Activated CD4-positive, alpha-beta memory T cell treated with anti-CD3 and anti-CD28 coated beads for 36 hours (primary cell): ENCODE measurements at regions of chr3 and their contacts with region 1.

Region 1: DNA sequence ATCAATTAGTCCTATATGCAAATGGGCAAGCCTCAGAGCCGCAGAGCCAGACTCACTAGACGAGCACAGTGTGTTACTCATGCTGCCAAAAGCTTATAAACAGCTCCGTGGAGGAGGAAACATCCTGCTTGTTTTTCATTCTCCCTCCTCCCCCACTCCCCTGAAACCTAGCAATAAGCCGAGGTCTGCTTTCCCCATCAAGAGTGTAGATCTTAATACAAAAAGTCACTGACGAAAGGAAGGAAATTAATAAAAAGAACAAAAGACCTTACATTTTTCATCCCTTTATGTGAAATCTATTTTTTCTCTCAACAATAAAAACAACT is 88.5 kb downstream of the XXYLT1 start:
- DNase-seq: peak; percentile 53
- H3K4me3 Mint-ChIP-seq: peak overlapping the region; percentile 38
- H3K27ac Mint-ChIP-seq: peak overlapping the region; percentile 80
- H3K4me1 Mint-ChIP-seq: peaks cover 59% of the 10 kb centered on the region
- H3K27me3 Mint-ChIP-seq: no peaks in the 10 kb centered on the region

Region 2: DNA sequence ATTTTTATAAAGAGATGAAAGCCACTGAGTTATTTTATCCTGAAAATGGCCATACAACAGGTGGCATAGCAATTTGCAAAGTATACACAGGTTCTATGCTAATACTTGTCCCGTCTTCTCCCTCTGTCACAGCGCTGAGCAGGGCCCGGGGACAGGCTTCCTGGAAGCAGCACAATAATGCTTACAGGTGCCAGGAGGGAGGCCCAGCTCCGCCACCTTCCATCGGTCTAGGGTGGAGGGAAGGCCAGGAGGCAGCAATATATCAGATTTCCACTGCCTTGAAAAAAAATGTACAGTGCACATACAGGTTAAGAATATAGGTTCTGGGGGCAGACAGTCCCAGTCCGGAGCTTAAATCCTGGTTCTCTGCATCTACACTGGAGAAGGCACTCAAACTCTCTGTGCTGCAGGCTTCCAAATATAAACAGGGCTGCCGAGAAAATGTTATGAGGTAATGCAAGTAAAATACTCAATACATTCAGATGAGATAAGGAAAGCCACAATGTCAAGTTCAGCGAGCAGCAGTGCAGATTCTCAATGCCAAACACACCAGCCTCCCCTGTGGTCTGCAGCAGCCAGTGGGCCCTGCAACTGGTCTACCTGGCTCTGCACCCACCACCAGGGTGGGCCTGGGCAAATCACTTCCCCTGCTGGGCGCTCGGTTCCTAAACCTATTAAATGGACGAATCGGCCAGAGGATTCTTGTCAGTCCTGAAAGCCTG is 101.0 kb before region 1 on chr3:
- CTCF ChIA-PET with region 1: no interaction called
- POLR2A ChIA-PET with region 1: no interaction called
- intact Hi-C with region 1: no loop called
- DNase-seq: no peak
- H3K4me3 Mint-ChIP-seq: no peak overlapping the region
- H3K27ac Mint-ChIP-seq: no peak overlapping the region
- H3K4me1 Mint-ChIP-seq: no peaks in the 10 kb centered on the region
- H3K27me3 Mint-ChIP-seq: no peaks in the 10 kb centered on the region

Region 3: GRCh38 chr3:195133462-195133861 is 49.0 kb before region 1 on chr3:
- CTCF ChIA-PET with region 1: interaction called, 3 read pairs
- POLR2A ChIA-PET with region 1: interaction called, 5 read pairs
- intact Hi-C with region 1: loop called (anchors 1 kb)
- DNase-seq: peak; percentile 90
- H3K4me3 Mint-ChIP-seq: no peak overlapping the region
- H3K27ac Mint-ChIP-seq: peak overlapping the region; percentile 61
- H3K4me1 Mint-ChIP-seq: peaks cover 44% of the 10 kb centered on the region
- H3K27me3 Mint-ChIP-seq: no peaks in the 10 kb centered on the region

Region 4: GRCh38 chr3:195147649-195148095 is 34.8 kb before region 1 on chr3:
- CTCF ChIA-PET with region 1: no interaction called
- POLR2A ChIA-PET with region 1: no interaction called
- intact Hi-C with region 1: loop called (anchors 5 kb)
- DNase-seq: peak; percentile 67
- H3K4me3 Mint-ChIP-seq: peak overlapping the region; percentile 66
- H3K27ac Mint-ChIP-seq: peak overlapping the region; percentile 10
- H3K4me1 Mint-ChIP-seq: peaks cover 25% of the 10 kb centered on the region
- H3K27me3 Mint-ChIP-seq: peaks cover 2% of the 10 kb centered on the region

Region 5: DNA sequence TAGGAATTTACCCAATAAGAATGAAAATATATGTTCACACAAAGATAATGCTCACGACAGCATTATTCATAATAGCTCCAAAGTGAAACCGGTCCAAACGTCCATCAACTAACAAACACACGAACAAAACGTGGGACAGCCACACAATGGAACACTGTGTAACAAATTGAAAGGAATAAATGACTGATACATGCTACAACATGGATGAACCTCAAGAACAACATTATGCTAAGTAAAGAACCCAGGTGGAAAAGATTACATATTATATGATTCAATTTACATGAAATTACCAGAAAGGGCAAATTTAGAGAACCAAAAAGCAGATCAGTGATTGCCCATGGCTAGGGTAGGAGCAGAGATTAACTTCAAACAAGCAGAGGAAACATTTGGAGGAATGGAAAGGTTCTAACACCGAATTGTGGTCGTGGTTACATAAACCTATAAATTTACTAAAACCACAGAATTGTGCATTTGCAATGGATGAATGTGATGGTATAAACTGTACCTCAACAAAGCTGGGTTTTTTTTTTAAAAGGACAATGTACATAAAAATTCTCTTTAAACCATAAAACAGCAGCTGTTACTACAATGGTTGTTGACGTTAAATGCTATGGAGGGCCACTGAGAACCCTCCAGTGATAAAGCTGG is 12.2 kb after region 1 on chr3:
- CTCF ChIA-PET with region 1: interaction called, 4 read pairs
- POLR2A ChIA-PET with region 1: interaction called, 6 read pairs
- intact Hi-C with region 1: loop called (anchors 1 kb)
- DNase-seq: peak; percentile 29
- H3K4me3 Mint-ChIP-seq: peak overlapping the region; percentile 27
- H3K27ac Mint-ChIP-seq: no peak overlapping the region
- H3K4me1 Mint-ChIP-seq: peaks cover 27% of the 10 kb centered on the region
- H3K27me3 Mint-ChIP-seq: no peaks in the 10 kb centered on the region

Region 6: DNA sequence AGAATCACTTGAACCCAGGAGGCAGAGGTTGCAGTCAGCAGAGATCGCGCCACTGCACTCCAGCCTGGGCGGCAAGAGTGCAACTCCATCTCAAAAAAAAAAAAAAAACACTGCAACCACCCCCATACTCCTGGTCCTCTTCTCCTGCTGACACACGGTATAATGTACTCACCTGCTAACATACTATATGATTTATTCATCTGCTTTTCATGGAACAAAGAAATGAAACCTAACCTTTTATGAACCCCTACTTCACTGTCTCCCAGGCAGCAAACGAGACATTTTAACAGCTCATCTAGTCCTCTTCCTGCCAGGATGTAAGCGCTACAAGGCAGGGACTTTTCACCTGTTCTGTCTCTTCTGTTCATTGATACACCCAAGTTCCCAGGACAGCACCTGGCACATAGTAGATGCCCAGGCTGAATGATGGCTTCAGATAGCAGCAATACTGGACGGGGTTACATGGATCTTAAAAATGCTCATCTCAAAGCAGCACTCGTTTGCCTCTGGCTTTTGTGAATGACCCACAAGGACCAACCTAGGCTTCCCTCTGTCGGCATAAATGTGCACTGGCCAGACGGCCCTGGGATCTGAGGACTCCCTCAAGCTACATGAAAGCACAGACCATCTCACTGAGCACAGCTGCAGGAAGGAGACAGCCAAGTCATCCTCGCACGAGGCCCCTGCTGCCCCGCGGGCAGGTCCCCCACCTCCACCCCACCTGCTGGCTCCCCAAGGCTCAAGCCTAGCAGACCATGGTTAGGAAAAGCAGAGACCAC is 68.2 kb after region 1 on chr3:
- CTCF ChIA-PET with region 1: no interaction called
- POLR2A ChIA-PET with region 1: no interaction called
- intact Hi-C with region 1: loop called (anchors 5 kb)
- DNase-seq: no peak
- H3K4me3 Mint-ChIP-seq: no peak overlapping the region
- H3K27ac Mint-ChIP-seq: no peak overlapping the region
- H3K4me1 Mint-ChIP-seq: peaks cover 16% of the 10 kb centered on the region
- H3K27me3 Mint-ChIP-seq: no peaks in the 10 kb centered on the region

Region 7: GRCh38 chr3:195587824-195588223 is 405.4 kb after region 1 on chr3:
- CTCF ChIA-PET with region 1: no interaction called
- POLR2A ChIA-PET with region 1: no interaction called
- intact Hi-C with region 1: loop called (anchors 5 kb)
- DNase-seq: peak; percentile 33
- H3K4me3 Mint-ChIP-seq: no peak overlapping the region
- H3K27ac Mint-ChIP-seq: no peak overlapping the region
- H3K4me1 Mint-ChIP-seq: peaks cover 5% of the 10 kb centered on the region
- H3K27me3 Mint-ChIP-seq: peaks cover 2% of the 10 kb centered on the region